ENCODE measurements at regions of chr10 and their contacts with region 1.

Region 1: GRCh38 chr10:30591249-30591670 is 38.3 kb downstream of the LYZL2 start:
- DNase-seq: no peak
- H3K4me3 ChIP-seq: no peak overlapping the region
- H3K27ac ChIP-seq: no peak overlapping the region
- H3K4me1 ChIP-seq: peaks cover 8% of the 10 kb centered on the region
- H3K27me3 ChIP-seq: no peaks in the 10 kb centered on the region
- CTCF ChIP-seq: peak; percentile 88

Region 2: DNA sequence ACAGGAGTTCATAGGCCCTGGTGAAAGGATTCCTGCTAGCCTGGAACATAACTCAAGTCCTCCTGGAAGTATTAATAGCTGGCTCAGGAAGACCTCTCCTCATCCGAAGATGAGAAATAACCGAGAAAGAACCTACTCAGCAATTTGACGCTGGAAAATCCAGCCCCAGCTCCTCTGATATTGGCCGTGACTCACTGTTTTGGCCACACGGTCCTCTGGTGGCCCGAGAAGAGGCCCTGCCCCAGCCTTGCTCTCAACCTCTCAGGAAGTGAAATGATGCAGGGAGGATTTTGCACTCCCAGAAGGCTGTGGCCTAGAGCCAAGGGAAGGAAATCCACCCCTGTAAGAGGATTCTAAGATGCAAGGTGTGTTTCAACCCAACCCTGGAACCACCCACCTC is 363.8 kb before region 1 on chr10:
- intact Hi-C with region 1: no loop called
- DNase-seq: peak; percentile 28
- H3K4me3 ChIP-seq: no peak overlapping the region
- H3K27ac ChIP-seq: peak overlapping the region; percentile 71
- H3K4me1 ChIP-seq: peaks cover 21% of the 10 kb centered on the region
- H3K27me3 ChIP-seq: peaks cover 8% of the 10 kb centered on the region
- CTCF ChIP-seq: no peak

Region 3: DNA sequence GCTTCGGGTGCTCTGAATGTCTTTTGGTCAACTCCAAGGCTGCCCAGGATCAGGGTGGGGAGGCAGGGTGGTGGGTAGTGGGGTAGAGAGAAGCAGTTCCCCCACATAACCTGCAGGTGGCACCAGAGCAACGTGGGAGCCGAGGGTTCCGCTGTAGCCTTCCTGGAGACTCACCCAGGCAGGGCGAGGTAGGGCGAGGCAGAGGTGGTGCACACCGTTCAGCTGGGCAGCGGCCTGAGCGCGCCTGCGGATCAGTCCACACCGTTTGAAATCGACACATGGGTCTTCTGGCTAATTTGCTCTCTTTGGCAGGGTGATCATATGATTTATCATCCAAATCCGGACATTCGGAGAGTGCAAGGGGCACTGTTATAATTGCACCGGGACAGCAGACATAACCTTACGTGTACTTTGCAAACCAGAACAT is 198.7 kb before region 1 on chr10:
- intact Hi-C with region 1: loop called (anchors 5 kb)
- DNase-seq: peak; percentile 68
- H3K4me3 ChIP-seq: peak overlapping the region; percentile 33
- H3K27ac ChIP-seq: no peak overlapping the region
- H3K4me1 ChIP-seq: peaks cover 18% of the 10 kb centered on the region
- H3K27me3 ChIP-seq: peaks cover 6% of the 10 kb centered on the region
- CTCF ChIP-seq: peak; percentile 98

Region 4: GRCh38 chr10:30534465-30535144 is 56.7 kb before region 1 on chr10:
- intact Hi-C with region 1: no loop called
- DNase-seq: peak; percentile 26
- H3K4me3 ChIP-seq: no peak overlapping the region
- H3K27ac ChIP-seq: no peak overlapping the region
- H3K4me1 ChIP-seq: peaks cover 28% of the 10 kb centered on the region
- H3K27me3 ChIP-seq: no peaks in the 10 kb centered on the region
- CTCF ChIP-seq: peak; percentile 92